Ascending aorta (tissue), 2 donors: ENCODE measurements at regions of chr12 and their contacts with region 1.

Region 1: GRCh38 chr12:94427501-94428381 is 31.9 kb downstream of the CEP83 start:
- DNase-seq: no peak
- H3K4me3 ChIP-seq: no peak overlapping the region
- H3K27ac ChIP-seq: no peak overlapping the region
- H3K4me1 ChIP-seq: peaks cover 0 to 3% of the 10 kb centered on the region in 2 donors
- H3K27me3 ChIP-seq: no peaks in the 10 kb centered on the region
- CTCF ChIP-seq: no peak

Region 2: GRCh38 chr12:94149781-94150239 is 277.9 kb before region 1 on chr12:
- intact Hi-C with region 1: loop called (anchors 5 kb)
- DNase-seq: peak in 1 of 2 donors; percentile 70
- H3K4me3 ChIP-seq: peak overlapping the region; percentile 65 to 82
- H3K27ac ChIP-seq: no peak overlapping the region
- H3K4me1 ChIP-seq: peaks cover 9 to 11% of the 10 kb centered on the region in 2 donors
- H3K27me3 ChIP-seq: no peaks in the 10 kb centered on the region
- CTCF ChIP-seq: no peak